WTC11 (cell line): ENCODE measurements at regions of chr11 and their contacts with region 1.

Region 1: GRCh38 chr11:131867457-131868257 is 497.2 kb downstream of the NTM start:
- DNase-seq: peak; percentile 79
- ATAC-seq: peak; percentile 69
- H3K4me3 Mint-ChIP-seq: no peak overlapping the region
- H3K27ac Mint-ChIP-seq: peak overlapping the region; percentile 69
- H3K4me1 Mint-ChIP-seq: peaks cover 63% of the 10 kb centered on the region
- H3K27me3 Mint-ChIP-seq: no peaks in the 10 kb centered on the region
- CTCF ChIP-seq: peak; percentile 41

Region 2: DNA sequence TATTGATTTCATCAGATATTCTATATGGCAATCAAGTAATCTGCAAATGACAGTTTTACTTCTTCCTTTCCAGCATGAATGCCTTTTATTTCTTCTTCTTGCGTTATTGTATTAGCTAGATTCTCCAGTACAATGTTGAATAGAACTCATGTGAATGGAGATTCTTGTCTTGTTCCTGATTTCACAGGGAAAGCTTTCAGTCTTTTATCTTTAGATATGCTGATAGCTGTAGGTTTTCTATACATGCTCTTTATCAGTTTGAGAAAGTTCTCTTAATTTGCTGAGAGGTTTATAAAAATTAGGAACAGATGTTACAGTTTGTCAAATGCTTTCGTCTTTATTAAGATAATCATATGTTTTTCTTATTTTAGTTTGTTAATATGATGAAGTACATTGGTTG is 150.0 kb before region 1 on chr11:
- CTCF ChIA-PET with region 1: no interaction called
- POLR2A ChIA-PET with region 1: no interaction called
- DNase-seq: no peak
- ATAC-seq: no peak
- H3K4me3 Mint-ChIP-seq: no peak overlapping the region
- H3K27ac Mint-ChIP-seq: no peak overlapping the region
- H3K4me1 Mint-ChIP-seq: no peaks in the 10 kb centered on the region
- H3K27me3 Mint-ChIP-seq: no peaks in the 10 kb centered on the region
- CTCF ChIP-seq: no peak

Region 3: DNA sequence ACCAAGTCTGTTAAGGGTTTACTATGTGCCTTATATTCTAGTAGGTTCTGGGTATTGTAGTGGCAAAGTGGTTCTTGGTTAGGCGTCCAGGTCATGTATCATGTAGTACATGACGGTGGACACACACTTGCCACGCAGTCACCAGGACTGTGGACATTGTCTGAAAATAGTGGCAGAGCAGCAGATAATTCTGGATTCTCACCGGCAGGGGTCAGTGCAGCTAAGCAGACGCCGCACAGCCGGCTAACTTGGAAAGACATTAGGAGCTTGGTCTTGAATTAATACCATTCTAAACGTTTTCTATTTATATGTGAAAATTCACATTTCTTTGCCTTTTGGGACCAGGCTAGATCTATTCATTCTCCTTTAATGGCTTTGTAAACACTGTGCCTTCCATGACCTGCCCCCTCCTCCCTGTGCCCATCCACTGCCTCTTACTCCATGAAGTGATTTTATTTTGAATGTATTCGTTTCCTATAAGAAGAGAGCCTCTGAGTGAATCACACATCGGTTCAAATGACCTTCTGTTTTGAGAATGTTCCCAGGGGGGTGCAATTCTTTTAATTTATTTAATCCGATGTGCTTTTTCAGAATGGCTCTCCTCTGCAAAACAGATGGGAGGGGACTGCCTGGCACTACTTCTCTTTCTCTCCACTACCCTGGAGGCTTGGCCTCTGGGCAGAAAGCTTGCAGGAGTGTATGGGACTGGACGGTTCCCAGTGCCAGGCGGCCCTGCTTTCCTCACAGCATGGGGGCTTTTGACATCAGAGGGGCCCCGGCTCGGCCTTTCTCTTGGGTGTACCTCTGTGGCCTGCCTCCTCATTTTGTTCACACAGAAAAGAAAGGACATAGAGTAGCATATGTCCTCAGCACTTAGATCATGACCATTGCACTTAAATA is 119.3 kb before region 1 on chr11:
- CTCF ChIA-PET with region 1: interaction called, 42 read pairs
- POLR2A ChIA-PET with region 1: no interaction called
- DNase-seq: peak; percentile 74
- ATAC-seq: peak; percentile 89
- H3K4me3 Mint-ChIP-seq: no peak overlapping the region
- H3K27ac Mint-ChIP-seq: no peak overlapping the region
- H3K4me1 Mint-ChIP-seq: peaks cover 7% of the 10 kb centered on the region
- H3K27me3 Mint-ChIP-seq: no peaks in the 10 kb centered on the region
- CTCF ChIP-seq: peak; percentile 77

Region 4: DNA sequence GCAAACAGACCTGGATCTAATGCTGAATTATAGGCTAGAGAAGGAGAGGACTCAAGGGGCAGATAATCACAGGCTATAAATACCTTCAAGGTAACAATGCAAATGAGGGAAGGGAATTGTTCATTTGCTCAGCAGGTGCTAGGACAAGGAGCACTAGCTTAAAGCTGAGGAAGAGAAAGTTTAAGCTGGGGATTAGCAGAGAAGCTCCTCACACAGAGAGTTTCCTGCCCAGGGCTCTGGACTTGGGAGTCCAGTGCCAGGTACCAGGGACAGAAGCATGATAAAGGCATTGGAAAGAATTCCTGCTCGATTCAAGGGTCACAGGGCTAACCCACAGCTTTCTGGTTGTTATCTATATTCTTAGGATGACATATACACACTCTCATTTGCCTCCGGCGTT is 12.7 kb after region 1 on chr11:
- CTCF ChIA-PET with region 1: interaction called, 30 read pairs
- POLR2A ChIA-PET with region 1: no interaction called
- DNase-seq: no peak
- ATAC-seq: peak; percentile 46
- H3K4me3 Mint-ChIP-seq: no peak overlapping the region
- H3K27ac Mint-ChIP-seq: no peak overlapping the region
- H3K4me1 Mint-ChIP-seq: peaks cover 24% of the 10 kb centered on the region
- H3K27me3 Mint-ChIP-seq: no peaks in the 10 kb centered on the region; the same call in 1 of the 2 replicates
- CTCF ChIP-seq: no peak

Region 5: GRCh38 chr11:131899950-131900580 is 32.4 kb after region 1 on chr11:
- CTCF ChIA-PET with region 1: interaction called, 79 read pairs
- POLR2A ChIA-PET with region 1: interaction called, 7 read pairs
- DNase-seq: no peak
- ATAC-seq: no peak
- H3K4me3 Mint-ChIP-seq: no peak overlapping the region
- H3K27ac Mint-ChIP-seq: no peak overlapping the region
- H3K4me1 Mint-ChIP-seq: peaks cover 41% of the 10 kb centered on the region
- H3K27me3 Mint-ChIP-seq: no peaks in the 10 kb centered on the region
- CTCF ChIP-seq: no peak

Region 6: DNA sequence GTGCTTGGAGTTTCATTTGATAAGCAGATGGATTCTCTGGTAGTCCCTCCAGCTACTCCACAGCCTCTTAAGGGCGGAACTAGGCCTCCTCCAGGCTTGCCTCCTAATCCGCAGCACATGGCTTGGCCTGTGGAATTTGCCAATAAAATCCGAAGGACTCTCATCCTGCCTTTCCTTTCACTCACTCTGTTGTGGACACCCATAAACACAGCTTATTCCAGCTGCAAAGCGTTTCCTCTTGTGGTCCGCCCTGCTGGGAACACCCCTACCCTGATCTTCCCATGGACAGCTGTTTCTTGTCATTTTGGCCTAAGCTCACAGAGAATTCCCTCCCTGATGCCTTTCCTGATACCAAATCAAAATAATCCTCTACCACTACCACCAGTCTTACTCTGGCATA is 49.0 kb after region 1 on chr11:
- CTCF ChIA-PET with region 1: interaction called, 142 read pairs
- POLR2A ChIA-PET with region 1: no interaction called
- DNase-seq: no peak
- ATAC-seq: no peak
- H3K4me3 Mint-ChIP-seq: no peak overlapping the region
- H3K27ac Mint-ChIP-seq: no peak overlapping the region
- H3K4me1 Mint-ChIP-seq: peaks cover 34% of the 10 kb centered on the region
- H3K27me3 Mint-ChIP-seq: peaks cover 13% of the 10 kb centered on the region
- CTCF ChIP-seq: no peak

Region 7: DNA sequence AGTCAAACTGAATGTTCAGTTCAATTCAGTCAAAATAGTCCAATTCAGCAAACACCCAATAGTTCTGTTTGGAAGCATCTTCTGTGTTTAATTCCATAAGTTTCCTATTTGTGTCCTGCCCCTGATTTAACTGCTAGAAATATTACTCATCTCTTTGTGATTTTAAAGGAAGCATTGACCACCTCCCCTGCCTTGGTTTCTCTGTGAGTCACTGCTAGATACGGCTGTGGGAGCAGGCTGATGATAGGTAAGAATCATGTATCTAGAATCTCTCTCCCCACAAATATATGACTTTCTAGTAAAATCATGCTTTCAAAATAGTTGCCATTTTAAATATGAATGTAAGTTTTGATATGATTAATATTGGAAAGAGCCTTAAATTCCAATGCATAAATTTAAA is 391.2 kb after region 1 on chr11:
- CTCF ChIA-PET with region 1: no interaction called
- POLR2A ChIA-PET with region 1: no interaction called
- DNase-seq: no peak
- ATAC-seq: no peak
- H3K4me3 Mint-ChIP-seq: no peak overlapping the region
- H3K27ac Mint-ChIP-seq: no peak overlapping the region
- H3K4me1 Mint-ChIP-seq: no peaks in the 10 kb centered on the region
- H3K27me3 Mint-ChIP-seq: no peaks in the 10 kb centered on the region
- CTCF ChIP-seq: no peak